ENCODE measurements at regions of chr17 and their contacts with region 1.

Region 1: DNA sequence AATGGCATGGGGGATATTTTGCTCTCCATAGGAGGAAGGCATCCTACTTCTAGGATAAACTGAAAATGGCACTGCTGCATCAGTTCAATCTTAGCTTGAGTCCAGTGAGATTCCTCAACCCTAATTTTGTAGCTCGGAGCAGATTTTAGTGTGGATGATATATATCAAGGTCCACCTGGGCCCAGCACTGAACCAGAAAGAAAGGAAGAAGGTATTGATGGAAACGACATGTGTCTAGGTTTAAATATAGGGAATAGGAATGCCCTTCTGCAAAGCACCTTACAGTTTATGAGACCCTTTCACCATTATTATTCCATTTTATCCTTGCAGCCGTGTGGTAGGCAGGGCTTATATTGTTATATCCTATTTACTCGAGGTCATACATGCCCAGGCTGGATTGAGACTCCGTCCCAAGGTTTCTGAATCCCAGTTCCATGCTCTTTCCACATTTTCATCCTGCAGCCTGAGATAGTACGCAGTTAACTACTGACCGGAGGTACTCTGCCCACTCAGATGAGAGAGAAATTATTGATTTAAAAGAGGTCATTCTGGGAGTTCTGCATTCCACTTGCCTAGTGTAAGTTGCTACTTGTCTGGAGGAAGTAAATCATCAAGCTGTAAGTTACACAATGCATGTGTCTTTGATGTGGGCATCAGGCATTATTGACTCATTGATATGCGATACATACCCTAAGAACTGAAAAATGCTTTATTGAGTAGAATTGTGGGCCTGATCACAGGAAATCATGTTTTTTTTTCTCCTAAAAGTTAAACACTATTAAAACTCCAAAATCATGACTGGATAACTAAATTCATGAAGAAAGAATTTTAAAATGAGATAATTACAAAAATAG is 10.1 kb downstream of the KRT39 start:
- DNase-seq: peak; percentile 100
- ATAC-seq: peak; percentile 99
- H3K4me3 ChIP-seq: peak overlapping the region in 1 of 3 experiments; percentile 15; a peak in 1 of 6 replicates
- H3K27ac ChIP-seq: peak overlapping the region; percentile 90
- H3K4me1 ChIP-seq: peaks cover 91% of the 10 kb centered on the region
- H3K27me3 ChIP-seq: no peaks in the 10 kb centered on the region
- CTCF ChIP-seq: 0 out of 2 replicates have a peak, but pooled peaks have one; percentile 21
- EP300 ChIP-seq: peak; percentile 99 to 100
- POLR2A ChIP-seq: peak in 1 of 2 experiments; percentile 48; a peak in 1 of 4 replicates
- RAD21 ChIP-seq: no peak

Region 2: DNA sequence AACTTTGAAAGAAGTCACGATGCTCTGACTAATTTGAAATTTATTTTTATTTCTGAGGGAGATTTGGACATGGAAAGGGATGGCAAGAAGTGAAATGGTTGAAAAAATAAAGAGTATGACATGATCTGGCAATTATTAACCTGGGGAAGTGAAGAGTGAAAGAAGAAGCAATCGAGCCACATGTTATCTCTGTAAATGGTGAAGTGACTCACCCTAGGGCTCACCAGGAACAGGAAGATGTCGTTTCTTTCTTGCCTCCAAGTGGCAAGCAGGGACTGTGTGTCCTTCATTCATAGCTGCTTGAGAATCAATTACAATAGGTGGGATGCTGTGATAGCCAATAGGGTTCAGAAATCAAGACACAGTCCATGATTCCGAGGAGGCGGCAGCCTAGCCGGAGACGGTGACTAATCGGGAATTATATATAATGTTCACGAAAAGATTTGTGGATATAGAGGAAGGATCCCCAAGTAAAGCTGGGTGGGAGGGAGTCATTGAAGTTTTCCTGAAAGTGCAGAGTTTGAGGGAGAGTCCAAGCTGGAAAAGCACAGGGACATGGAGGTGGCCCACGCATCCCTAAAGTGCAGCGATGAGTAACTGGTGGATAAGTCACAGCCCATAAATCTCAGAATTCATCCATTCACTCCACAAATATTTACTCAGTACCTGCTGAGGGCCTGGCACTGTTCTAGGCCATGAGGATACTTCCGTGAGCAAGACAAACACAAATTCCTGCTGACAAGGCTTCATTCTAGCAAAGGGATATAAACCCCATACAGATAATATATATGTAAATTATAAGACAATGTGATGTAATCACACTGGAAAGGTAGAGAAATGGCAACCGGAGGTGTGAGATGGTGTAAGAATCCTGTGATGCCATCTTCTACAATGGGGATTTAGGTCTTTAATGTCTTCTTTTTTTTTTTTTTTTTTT is 53.2 kb before region 1 on chr17:
- CTCF ChIA-PET with region 1: no interaction called
- POLR2A ChIA-PET with region 1: interaction called, 17 read pairs
- in situ Hi-C with region 1: no loop called
- intact Hi-C with region 1: no loop called
- DNase-seq: peak; percentile 82
- ATAC-seq: peak; percentile 39
- H3K4me3 ChIP-seq: peak overlapping the region in 1 of 3 experiments; percentile 20; a peak in 1 of 6 replicates
- H3K27ac ChIP-seq: peak overlapping the region; percentile 89
- H3K4me1 ChIP-seq: peaks cover 57% of the 10 kb centered on the region
- H3K27me3 ChIP-seq: no peaks in the 10 kb centered on the region
- CTCF ChIP-seq: no peak
- EP300 ChIP-seq: peak in 1 of 2 experiments; percentile 75; a peak in 2 of 4 replicates
- POLR2A ChIP-seq: 0 out of 4 replicates have a peak, but pooled peaks of 1 of the 2 experiments have one; percentile 36
- RAD21 ChIP-seq: no peak

Region 3: GRCh38 chr17:40915199-40915661 is 41.4 kb before region 1 on chr17:
- CTCF ChIA-PET with region 1: no interaction called
- POLR2A ChIA-PET with region 1: interaction called, 18 read pairs
- in situ Hi-C with region 1: no loop called
- intact Hi-C with region 1: loop called (anchors 1 kb)
- DNase-seq: peak; percentile 96
- ATAC-seq: peak; percentile 81
- H3K4me3 ChIP-seq: no peak overlapping the region
- H3K27ac ChIP-seq: peak overlapping the region; percentile 56
- H3K4me1 ChIP-seq: peaks cover 25% of the 10 kb centered on the region
- H3K27me3 ChIP-seq: no peaks in the 10 kb centered on the region
- CTCF ChIP-seq: no peak
- EP300 ChIP-seq: peak; percentile 12 to 79; a peak in 1 of 4 replicates
- POLR2A ChIP-seq: no peak
- RAD21 ChIP-seq: no peak

Region 4: GRCh38 chr17:40937384-40937819 is 19.2 kb before region 1 on chr17 and contains the start of gene KRT23:
- CTCF ChIA-PET with region 1: no interaction called
- POLR2A ChIA-PET with region 1: interaction called, 10 read pairs
- in situ Hi-C with region 1: no loop called
- intact Hi-C with region 1: loop called (anchors 2 kb)
- DNase-seq: no peak
- ATAC-seq: peak; percentile 73
- H3K4me3 ChIP-seq: peak within 1 kb of the TSS; percentile 32 to 65 (median 62)
- H3K27ac ChIP-seq: peak within 1 kb of the TSS; percentile 48
- H3K4me1 ChIP-seq: peaks cover 62% of the 10 kb centered on the region
- H3K27me3 ChIP-seq: no peaks in the 10 kb centered on the region
- CTCF ChIP-seq: no peak
- EP300 ChIP-seq: no peak
- POLR2A ChIP-seq: no peak
- RAD21 ChIP-seq: no peak
- total RNA-seq, gene KRT23: 24.7 and 32.9 TPM in 2 replicates

Region 5: DNA sequence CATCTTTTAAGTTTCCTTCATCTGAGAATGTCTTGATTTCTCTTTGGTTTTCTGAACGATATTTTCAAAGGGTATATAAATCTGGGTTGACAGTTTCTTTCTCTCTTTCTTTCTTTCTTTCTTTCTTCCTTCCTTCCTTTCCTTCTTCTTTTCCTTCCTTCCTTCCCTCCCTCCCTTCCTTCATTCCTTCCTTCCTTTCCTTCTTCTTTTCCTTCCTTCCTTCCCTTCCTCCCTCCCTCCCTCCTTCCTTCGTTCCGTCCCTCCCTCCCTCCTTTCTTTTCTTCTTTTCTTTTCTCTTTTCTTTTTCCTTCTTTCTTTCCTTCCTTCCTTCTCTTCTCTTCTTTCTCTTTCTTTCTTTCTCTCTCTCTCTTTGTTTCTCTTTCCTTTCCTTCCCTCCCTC is 17.7 kb after region 1 on chr17:
- CTCF ChIA-PET with region 1: no interaction called
- POLR2A ChIA-PET with region 1: no interaction called
- in situ Hi-C with region 1: no loop called
- intact Hi-C with region 1: no loop called
- DNase-seq: no peak
- ATAC-seq: no peak
- H3K4me3 ChIP-seq: no peak overlapping the region
- H3K27ac ChIP-seq: no peak overlapping the region
- H3K4me1 ChIP-seq: no peaks in the 10 kb centered on the region
- H3K27me3 ChIP-seq: no peaks in the 10 kb centered on the region
- CTCF ChIP-seq: no peak
- EP300 ChIP-seq: no peak
- POLR2A ChIP-seq: no peak
- RAD21 ChIP-seq: no peak

Region 6: DNA sequence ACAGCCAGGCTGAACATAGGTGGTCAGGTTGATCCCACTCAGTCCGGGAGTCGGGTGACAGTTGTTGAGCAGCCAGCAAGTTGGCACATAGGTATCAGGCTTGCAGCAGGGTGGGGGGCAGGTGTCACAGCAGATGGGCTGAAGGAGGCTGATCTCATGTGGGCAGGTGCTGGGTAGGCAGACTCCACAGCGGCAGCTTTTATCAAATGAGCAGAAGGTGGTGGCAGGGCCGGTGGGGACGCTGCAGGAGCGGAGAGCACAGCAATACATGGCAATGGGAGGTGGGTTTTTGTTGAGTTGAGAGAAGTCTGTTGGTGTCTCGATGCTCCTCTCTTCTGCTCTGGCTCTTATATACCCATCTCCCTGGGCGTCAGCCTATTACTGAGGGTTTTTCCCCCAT is 52.2 kb after region 1 on chr17 and contains the start of gene KRTAP3-1:
- CTCF ChIA-PET with region 1: no interaction called
- POLR2A ChIA-PET with region 1: interaction called, 15 read pairs
- in situ Hi-C with region 1: loop called (anchors 5 kb)
- intact Hi-C with region 1: loop called (anchors 1 kb)
- DNase-seq: peak; percentile 28
- ATAC-seq: peak; percentile 74
- H3K4me3 ChIP-seq: no peak within 1 kb of the TSS; a peak in 1 of 6 replicates
- H3K27ac ChIP-seq: peak within 1 kb of the TSS; percentile 70
- H3K4me1 ChIP-seq: peaks cover 71% of the 10 kb centered on the region
- H3K27me3 ChIP-seq: no peaks in the 10 kb centered on the region
- CTCF ChIP-seq: no peak
- EP300 ChIP-seq: no peak
- POLR2A ChIP-seq: no peak
- RAD21 ChIP-seq: no peak
- total RNA-seq, gene KRTAP3-1: 0.29 and 0.81 TPM in 2 replicates

Region 7: GRCh38 chr17:41049110-41049509 is 92.5 kb after region 1 on chr17:
- CTCF ChIA-PET with region 1: no interaction called
- POLR2A ChIA-PET with region 1: no interaction called
- in situ Hi-C with region 1: loop called (anchors 10 kb)
- intact Hi-C with region 1: no loop called
- DNase-seq: peak; percentile 63
- ATAC-seq: no peak; the same call in 2 of the 3 replicates
- H3K4me3 ChIP-seq: no peak overlapping the region
- H3K27ac ChIP-seq: peak overlapping the region; percentile 19
- H3K4me1 ChIP-seq: peaks cover 17% of the 10 kb centered on the region
- H3K27me3 ChIP-seq: no peaks in the 10 kb centered on the region
- CTCF ChIP-seq: no peak
- EP300 ChIP-seq: peak in 1 of 2 experiments; percentile 9; a peak in 1 of 4 replicates
- POLR2A ChIP-seq: no peak
- RAD21 ChIP-seq: no peak

Region 8: GRCh38 chr17:41060052-41060604 is 103.5 kb after region 1 on chr17 and contains the start of gene KRTAP2-3:
- CTCF ChIA-PET with region 1: no interaction called
- POLR2A ChIA-PET with region 1: interaction called, 15 read pairs
- in situ Hi-C with region 1: loop called (anchors 10 kb)
- intact Hi-C with region 1: no loop called
- DNase-seq: peak; percentile 36
- ATAC-seq: no peak
- H3K4me3 ChIP-seq: no peak within 1 kb of the TSS; a peak in 1 of 6 replicates
- H3K27ac ChIP-seq: peak within 1 kb of the TSS; percentile 79
- H3K4me1 ChIP-seq: peaks cover 55% of the 10 kb centered on the region
- H3K27me3 ChIP-seq: no peaks in the 10 kb centered on the region
- CTCF ChIP-seq: no peak
- EP300 ChIP-seq: no peak
- POLR2A ChIP-seq: no peak
- RAD21 ChIP-seq: no peak
- total RNA-seq, gene KRTAP2-3: not detected in 2 replicates